B cell (primary cell): ENCODE measurements at regions of chr6 and their contacts with region 1.

Region 1: DNA sequence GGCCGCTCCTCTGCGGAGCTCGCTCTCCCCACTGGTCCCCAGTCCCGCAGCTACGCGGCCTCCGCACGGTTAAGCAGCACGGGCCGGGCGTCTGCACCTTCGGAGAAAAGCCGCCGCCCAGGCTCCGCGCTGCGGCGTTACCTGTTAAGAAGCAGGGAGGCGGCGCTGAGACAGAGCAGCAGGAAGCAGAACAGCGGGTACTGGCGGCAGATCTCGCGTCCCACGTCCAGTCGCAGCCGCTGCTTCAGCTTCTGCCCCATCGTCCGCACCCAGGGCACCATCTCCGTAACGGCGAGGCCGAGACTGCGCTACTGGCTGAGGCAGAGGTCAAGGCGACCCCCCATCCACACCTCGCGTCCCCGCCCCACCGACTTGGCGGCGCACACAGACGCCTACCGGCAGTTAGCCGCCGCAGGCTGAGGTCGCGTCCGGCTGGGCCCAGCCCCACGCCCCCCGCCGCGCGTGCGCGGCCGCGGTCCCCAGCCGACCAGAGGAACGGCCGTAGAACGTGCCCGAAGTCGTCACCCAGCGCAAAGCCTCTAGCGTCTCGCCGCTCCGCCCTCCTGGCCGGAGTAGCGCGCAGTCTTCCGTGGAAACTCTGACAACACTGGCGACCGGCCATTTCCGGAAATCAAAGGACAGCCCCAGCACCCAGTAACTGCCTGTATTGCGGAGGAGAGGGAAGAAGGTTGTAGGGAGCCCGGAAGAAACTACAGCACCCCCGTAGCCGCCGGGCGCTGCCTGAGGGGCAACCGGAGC is at the start of gene SNX14:
- DNase-seq: peak; percentile 90
- ATAC-seq: peak; percentile 83
- H3K4me3 ChIP-seq: peak within 1 kb of the TSS; percentile 67 to 89 (median 79)
- H3K4me3 Mint-ChIP-seq: peak within 1 kb of the TSS; percentile 100
- H3K27ac ChIP-seq: peak within 1 kb of the TSS; percentile 59 to 73
- H3K27ac Mint-ChIP-seq: peak within 1 kb of the TSS; percentile 99
- H3K4me1 ChIP-seq: peaks cover 13 to 19% of the 10 kb centered on the region in 2 donors
- H3K4me1 Mint-ChIP-seq: peaks cover 39% of the 10 kb centered on the region
- H3K27me3 ChIP-seq: no peaks in the 10 kb centered on the region
- H3K27me3 Mint-ChIP-seq: no peaks in the 10 kb centered on the region
- CTCF ChIP-seq: no peak
- total RNA-seq, gene SNX14: 80.0 and 95.1 TPM in 2 replicates

Region 2: DNA sequence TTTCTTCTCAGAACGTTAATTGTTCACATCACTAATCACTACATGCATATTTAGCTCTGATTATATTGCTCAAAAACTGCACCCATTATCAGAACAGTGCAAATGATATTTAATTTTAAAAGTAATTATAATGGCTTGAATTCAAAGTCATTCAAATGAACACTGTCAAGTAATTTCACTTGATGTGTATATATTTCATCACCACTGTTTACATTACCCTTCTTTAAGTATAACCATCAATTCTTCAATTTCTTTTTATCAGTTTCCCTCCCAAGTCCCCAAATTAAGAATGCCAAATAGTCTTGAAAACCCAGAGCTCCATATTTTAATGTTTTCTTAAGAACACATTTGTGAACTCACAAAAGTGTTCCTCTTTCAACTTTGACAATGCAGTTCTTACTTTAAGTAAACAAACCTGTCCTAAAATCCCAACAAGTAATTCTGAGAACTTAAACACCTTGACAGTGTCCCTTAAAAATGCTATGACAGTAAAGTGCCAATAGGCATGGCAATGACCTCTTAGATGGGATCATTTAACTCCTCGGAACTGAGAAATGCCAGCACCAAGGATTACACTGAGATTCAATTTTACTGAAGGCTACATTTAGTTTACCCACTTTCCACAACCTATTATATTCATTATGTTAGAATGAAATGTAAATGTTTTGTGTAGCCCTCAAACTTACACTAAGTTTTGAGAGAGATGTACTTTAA is 16.7 kb after region 1 on chr6:
- CTCF ChIA-PET with region 1: interaction called, 3 read pairs
- POLR2A ChIA-PET with region 1: no interaction called
- intact Hi-C with region 1: loop called (anchors 2 kb)
- DNase-seq: no peak
- ATAC-seq: no peak
- H3K4me3 ChIP-seq: no peak overlapping the region
- H3K4me3 Mint-ChIP-seq: no peak overlapping the region
- H3K27ac ChIP-seq: no peak overlapping the region
- H3K27ac Mint-ChIP-seq: no peak overlapping the region
- H3K4me1 ChIP-seq: no peaks in the 10 kb centered on the region
- H3K4me1 Mint-ChIP-seq: no peaks in the 10 kb centered on the region
- H3K27me3 ChIP-seq: no peaks in the 10 kb centered on the region
- H3K27me3 Mint-ChIP-seq: no peaks in the 10 kb centered on the region
- CTCF ChIP-seq: no peak

Region 3: GRCh38 chr6:85642774-85643536 is 49.3 kb after region 1 on chr6 and contains the start of gene SYNCRIP:
- CTCF ChIA-PET with region 1: interaction called, 6 read pairs
- POLR2A ChIA-PET with region 1: interaction called, 31 read pairs
- intact Hi-C with region 1: loop called (anchors 1 kb)
- DNase-seq: peak; percentile 98
- ATAC-seq: peak; percentile 80
- H3K4me3 ChIP-seq: peak within 1 kb of the TSS; percentile 79 to 100 (median 82)
- H3K4me3 Mint-ChIP-seq: peak within 1 kb of the TSS; percentile 92
- H3K27ac ChIP-seq: peak within 1 kb of the TSS; percentile 97 to 98
- H3K27ac Mint-ChIP-seq: peak within 1 kb of the TSS; percentile 99
- H3K4me1 ChIP-seq: peaks cover 20 to 27% of the 10 kb centered on the region in 2 donors
- H3K4me1 Mint-ChIP-seq: peaks cover 43% of the 10 kb centered on the region
- H3K27me3 ChIP-seq: no peaks in the 10 kb centered on the region
- H3K27me3 Mint-ChIP-seq: no peaks in the 10 kb centered on the region
- CTCF ChIP-seq: no peak
- total RNA-seq, gene SYNCRIP: 88.5 and 98.3 TPM in 2 replicates